ENCODE measurements at regions of chr18 and their contacts with region 1.

Region 1: GRCh38 chr18:13159579-13159978 is 59.0 kb upstream of the LDLRAD4 start:
- DNase-seq: peak; percentile 34
- H3K4me3 Mint-ChIP-seq: no peak overlapping the region
- H3K27ac Mint-ChIP-seq: no peak overlapping the region
- H3K4me1 Mint-ChIP-seq: peaks cover 3% of the 10 kb centered on the region
- H3K27me3 Mint-ChIP-seq: no peaks in the 10 kb centered on the region

Region 2: DNA sequence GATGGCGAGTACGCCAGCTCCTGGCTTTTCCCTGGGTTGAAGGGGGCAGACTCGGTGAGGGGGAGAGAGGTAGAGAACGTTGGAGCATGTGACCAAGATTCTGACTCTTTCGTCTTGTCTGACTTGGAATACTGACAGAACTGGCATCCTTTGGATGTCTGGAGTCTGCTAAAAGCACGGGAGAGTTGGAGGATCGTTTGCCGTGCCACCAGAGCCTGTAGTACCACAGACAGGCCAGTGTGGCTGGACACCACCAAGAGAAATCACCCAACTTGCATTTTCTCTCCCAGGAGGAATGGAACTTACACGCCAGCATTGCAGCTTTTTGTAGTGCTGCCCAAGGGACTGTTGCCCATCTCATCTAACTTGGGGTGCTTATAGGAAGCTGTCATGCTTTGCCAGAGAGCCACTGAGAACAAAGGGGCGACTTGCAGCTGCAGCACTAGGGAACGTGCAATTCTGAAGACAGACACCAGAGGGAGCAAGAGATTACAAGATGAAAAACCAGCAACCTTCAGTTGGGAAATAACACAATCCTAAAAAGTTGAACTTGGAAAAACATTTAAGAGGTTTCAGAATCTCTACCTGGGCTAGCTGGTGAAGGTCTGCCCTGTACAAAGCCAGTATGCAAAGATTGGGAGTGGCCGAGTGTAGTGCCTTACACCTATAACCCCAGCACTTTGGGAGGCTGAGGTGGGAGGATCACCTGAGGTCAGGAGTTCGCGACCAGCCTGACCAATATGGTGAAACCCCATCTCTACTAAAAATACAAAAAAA is 432.6 kb before region 1 on chr18:
- CTCF ChIA-PET with region 1: no interaction called
- intact Hi-C with region 1: loop called (anchors 1 kb)
- DNase-seq: peak; percentile 72
- H3K4me3 Mint-ChIP-seq: no peak overlapping the region
- H3K27ac Mint-ChIP-seq: no peak overlapping the region
- H3K4me1 Mint-ChIP-seq: peaks cover 4% of the 10 kb centered on the region
- H3K27me3 Mint-ChIP-seq: no peaks in the 10 kb centered on the region

Region 3: DNA sequence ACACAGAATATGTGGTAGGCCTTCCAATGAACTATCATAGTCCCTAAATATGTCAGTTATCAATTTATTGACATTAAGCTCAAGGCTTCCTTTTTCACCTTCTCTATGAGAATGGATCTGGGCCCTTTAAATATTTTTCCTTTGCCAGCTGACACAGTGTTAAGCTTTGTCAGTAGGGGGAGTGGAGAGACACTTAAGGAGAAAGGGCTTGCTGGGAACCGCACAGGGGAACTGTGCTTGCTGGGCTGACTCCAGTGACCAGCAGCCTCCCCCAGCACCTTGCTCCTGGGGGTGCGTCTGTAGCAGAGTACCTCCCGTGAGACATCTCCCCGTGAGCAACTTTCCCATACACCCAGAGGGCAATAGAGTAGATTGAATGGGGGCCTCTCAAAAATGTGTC is 269.1 kb before region 1 on chr18:
- CTCF ChIA-PET with region 1: no interaction called
- intact Hi-C with region 1: loop called (anchors 2 kb)
- DNase-seq: no peak
- H3K4me3 Mint-ChIP-seq: no peak overlapping the region
- H3K27ac Mint-ChIP-seq: no peak overlapping the region
- H3K4me1 Mint-ChIP-seq: peaks cover 11% of the 10 kb centered on the region
- H3K27me3 Mint-ChIP-seq: peaks cover 16% of the 10 kb centered on the region

Region 4: GRCh38 chr18:13124411-13124810 is 35.2 kb before region 1 on chr18:
- CTCF ChIA-PET with region 1: interaction called, 13 read pairs
- intact Hi-C with region 1: no loop called
- DNase-seq: no peak
- H3K4me3 Mint-ChIP-seq: no peak overlapping the region
- H3K27ac Mint-ChIP-seq: no peak overlapping the region
- H3K4me1 Mint-ChIP-seq: no peaks in the 10 kb centered on the region
- H3K27me3 Mint-ChIP-seq: no peaks in the 10 kb centered on the region

Region 5: DNA sequence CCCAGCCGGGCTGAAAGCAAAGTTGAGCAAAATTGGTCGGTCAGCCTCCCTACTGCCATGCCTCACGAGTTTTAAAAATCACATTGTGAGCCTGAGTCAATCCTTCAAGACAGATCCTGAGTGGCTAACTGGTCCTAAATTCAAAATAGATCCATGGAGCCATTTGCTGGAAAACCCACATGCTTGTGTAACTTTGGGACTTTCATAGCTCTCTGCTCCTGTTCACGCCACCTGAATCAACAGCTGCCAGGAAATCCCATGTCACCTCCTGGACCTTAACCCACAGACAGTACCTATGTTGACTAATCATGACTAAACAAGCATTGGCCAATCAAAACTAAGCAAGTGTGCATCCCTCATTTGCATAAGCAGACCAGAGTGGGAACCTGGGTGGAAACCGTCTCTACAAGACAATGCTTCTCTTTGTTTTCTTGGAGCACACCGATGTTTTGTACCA is 16.2 kb after region 1 on chr18:
- CTCF ChIA-PET with region 1: interaction called, 19 read pairs
- intact Hi-C with region 1: no loop called
- DNase-seq: peak; percentile 72
- H3K4me3 Mint-ChIP-seq: no peak overlapping the region
- H3K27ac Mint-ChIP-seq: no peak overlapping the region
- H3K4me1 Mint-ChIP-seq: peaks cover 12% of the 10 kb centered on the region
- H3K27me3 Mint-ChIP-seq: no peaks in the 10 kb centered on the region

Measured in activated naive CD4-positive, alpha-beta T cell treated with anti-CD3 and anti-CD28 coated beads for 36 hours (primary cell).